ENCODE measurements at regions of chr12 and their contacts with region 1.

Region 1: GRCh38 chr12:92466391-92467305 is 236.1 kb upstream of the PLEKHG7 start:
- DNase-seq: peak; percentile 61 to 65
- ATAC-seq: peak; percentile 77 to 78
- H3K4me3 ChIP-seq: peak overlapping the region; percentile 16 to 42 (median 28)
- H3K27ac ChIP-seq: peak overlapping the region; percentile 68 to 87 (median 78)
- H3K4me1 ChIP-seq: peaks cover 47 to 80% of the 10 kb centered on the region in 2 donors
- H3K27me3 ChIP-seq: no peaks in the 10 kb centered on the region
- CTCF ChIP-seq: no peak
- POLR2A ChIP-seq: peak in 1 of 2 donors; percentile 29

Region 2: DNA sequence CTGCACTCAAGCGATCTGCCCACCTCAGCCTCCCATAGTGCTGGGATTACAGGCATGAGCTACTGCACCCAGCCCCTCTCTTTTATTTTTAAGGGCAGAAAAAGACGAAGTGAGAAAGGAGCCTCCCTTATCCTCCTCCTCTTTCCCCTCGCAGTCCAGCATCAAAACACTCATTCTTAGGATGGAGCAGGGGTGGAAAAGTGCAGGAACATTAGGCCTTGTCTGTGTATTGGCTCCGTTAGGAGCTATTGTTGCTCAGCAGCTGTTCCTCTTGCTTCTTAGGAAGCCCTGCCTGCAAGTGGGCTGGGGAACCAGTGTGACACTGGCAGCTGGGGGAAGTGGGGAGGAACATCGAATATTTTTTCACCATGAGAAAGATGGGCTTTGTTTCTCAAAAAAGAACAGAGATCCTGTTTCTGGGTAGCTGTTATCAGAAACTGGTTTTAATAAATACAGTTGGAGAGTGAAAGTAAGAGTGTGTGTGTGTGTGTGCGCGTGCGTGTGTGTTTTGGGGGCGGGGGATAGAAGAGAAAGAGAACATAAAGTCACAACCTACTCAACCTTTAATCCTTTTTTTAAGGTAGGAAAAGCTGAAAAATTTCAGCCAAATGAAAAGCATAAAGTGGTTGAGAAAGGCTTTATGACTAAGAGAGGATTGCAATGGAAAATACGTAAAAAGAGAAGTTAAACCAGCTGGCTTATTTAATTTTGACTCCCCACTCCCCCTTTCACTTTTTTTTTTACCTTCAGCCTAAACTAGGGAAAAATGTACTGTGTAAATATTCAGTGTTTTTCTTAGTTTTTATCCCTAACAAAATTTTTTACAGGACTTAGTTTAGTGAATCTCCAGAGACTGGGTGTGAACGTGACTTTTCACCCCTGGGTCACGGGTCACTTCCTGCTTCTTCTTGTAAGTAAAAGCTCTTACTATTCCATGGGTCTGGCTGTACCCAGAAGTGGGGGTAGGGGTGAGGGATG is 38.9 kb after region 1 on chr12:
- in situ Hi-C with region 1: no loop called
- intact Hi-C with region 1: loop called (anchors 5 kb)
- DNase-seq: peak in 1 of 2 donors; percentile 39
- ATAC-seq: peak; percentile 27 to 48
- H3K4me3 ChIP-seq: peak overlapping the region; percentile 0 to 18 (median 8)
- H3K27ac ChIP-seq: peak overlapping the region; percentile 51 to 74 (median 70)
- H3K4me1 ChIP-seq: peaks cover 46 to 48% of the 10 kb centered on the region in 2 donors
- H3K27me3 ChIP-seq: no peaks in the 10 kb centered on the region
- CTCF ChIP-seq: no peak
- POLR2A ChIP-seq: no peak

Region 3: GRCh38 chr12:92593734-92594402 is 127.2 kb after region 1 on chr12:
- in situ Hi-C with region 1: no loop called
- intact Hi-C with region 1: no loop called
- DNase-seq: peak in 1 of 2 donors; percentile 28
- ATAC-seq: peak; percentile 52 to 56
- H3K4me3 ChIP-seq: no peak overlapping the region
- H3K27ac ChIP-seq: no peak overlapping the region
- H3K4me1 ChIP-seq: no peaks in the 10 kb centered on the region
- H3K27me3 ChIP-seq: no peaks in the 10 kb centered on the region
- CTCF ChIP-seq: no peak
- POLR2A ChIP-seq: no peak

Measured in gastrocnemius medialis (tissue), 4 donors.